ENCODE measurements at regions of chr16 and their contacts with region 1.

Region 1: GRCh38 chr16:11667824-11668622 is at the start of gene SNN:
- DNase-seq: peak; percentile 86
- H3K4me3 ChIP-seq: peak within 1 kb of the TSS; percentile 88 to 89
- H3K27ac ChIP-seq: peak within 1 kb of the TSS; percentile 69 to 74
- H3K4me1 ChIP-seq: peaks cover 23% of the 10 kb centered on the region
- H3K27me3 ChIP-seq: no peaks in the 10 kb centered on the region
- CTCF ChIP-seq: no peak
- POLR2A ChIP-seq: peak; percentile 25
- total RNA-seq, gene SNN: 20.8 TPM

Region 2: DNA sequence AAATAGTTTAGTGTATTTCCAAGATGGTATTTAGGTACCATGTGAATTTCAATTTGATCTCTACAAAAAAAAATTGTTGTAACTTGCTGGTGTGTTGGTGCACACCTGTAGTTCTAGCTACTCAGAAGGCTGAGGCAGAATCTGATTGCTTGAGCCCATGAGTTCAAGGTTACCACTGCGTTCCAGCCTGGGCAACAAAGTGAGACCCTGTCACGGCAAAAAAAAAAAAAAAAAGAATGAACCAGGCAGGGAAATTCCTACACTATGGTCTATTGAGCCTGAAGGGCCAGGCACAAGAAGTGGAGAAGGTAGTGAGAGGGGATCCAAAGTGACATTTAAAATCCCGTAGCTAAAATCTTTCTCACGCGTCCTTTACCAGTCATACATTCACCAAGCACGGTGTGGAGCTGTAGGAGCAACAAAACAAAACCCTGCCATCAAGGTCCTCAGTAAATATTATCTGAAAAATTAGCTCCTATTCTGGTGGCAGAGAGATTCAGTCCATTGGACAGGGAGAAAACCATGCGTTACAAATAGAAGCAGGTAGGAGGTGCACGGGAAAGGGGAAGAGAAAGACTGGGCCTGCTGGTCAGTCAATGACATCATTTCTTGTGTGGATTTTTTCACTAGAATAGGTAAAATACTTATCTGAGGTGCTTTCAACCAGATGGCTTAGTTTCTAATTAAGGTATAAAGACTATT is 47.4 kb after region 1 on chr16:
- intact Hi-C with region 1: loop called (anchors 5 kb)
- DNase-seq: no peak
- H3K4me3 ChIP-seq: no peak overlapping the region
- H3K27ac ChIP-seq: peak overlapping the region in 1 of 2 donors; percentile 44
- H3K4me1 ChIP-seq: no peaks in the 10 kb centered on the region
- H3K27me3 ChIP-seq: no peaks in the 10 kb centered on the region
- CTCF ChIP-seq: peak in 1 of 4 experiments; percentile 7
- POLR2A ChIP-seq: no peak